Activated CD4-positive, alpha-beta T cell treated with anti-CD3 and anti-CD28 coated beads, Interleukin-2, amount 10 ng/mL, durations not matched to agents 24 days and 14 days (primary cell): ENCODE measurements at regions of chr14 and their contacts with region 1.

Region 1: DNA sequence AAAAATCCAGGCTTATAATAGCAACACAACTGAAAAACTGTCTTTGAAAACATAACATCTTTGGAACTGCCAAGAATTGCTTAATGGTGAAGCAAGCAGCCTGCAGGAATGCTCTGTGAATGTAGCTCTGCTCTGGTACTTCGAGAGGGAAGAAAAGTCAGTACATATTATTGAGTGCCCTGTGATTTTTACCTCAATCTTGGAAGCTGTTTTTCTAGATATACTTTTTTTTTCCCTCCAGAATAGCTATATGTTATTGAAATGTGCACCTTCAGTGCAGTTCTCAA is 508.1 kb downstream of the PCNX1 start:
- DNase-seq: no peak
- H3K4me3 Mint-ChIP-seq: no peak overlapping the region
- H3K27ac Mint-ChIP-seq: no peak overlapping the region
- H3K4me1 Mint-ChIP-seq: peaks cover 25% of the 10 kb centered on the region
- H3K27me3 Mint-ChIP-seq: no peaks in the 10 kb centered on the region

Region 2: GRCh38 chr14:71212683-71213107 is 202.7 kb before region 1 on chr14:
- intact Hi-C with region 1: loop called (anchors 5 kb)
- DNase-seq: no peak
- H3K4me3 Mint-ChIP-seq: no peak overlapping the region
- H3K27ac Mint-ChIP-seq: no peak overlapping the region
- H3K4me1 Mint-ChIP-seq: peaks cover 12% of the 10 kb centered on the region
- H3K27me3 Mint-ChIP-seq: no peaks in the 10 kb centered on the region

Region 3: DNA sequence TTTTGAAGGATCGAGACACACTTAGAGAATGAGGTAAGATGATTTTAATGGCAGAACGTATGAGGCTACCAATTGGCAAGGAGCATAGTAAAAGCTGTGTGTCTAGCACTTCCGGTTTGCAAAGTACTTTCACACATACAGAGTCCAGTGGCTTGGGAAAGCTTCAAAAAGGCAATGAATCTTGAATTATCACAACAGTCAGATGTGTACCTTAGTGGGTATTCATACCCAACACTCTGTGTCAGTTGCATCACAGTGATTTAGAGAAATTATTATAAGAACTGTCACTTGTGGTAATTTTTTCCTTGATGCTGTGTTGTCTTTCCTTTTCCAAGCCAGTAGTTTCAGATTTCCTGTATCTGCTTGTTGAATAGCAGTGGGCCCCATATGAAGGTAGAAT is 83.9 kb before region 1 on chr14:
- intact Hi-C with region 1: loop called (anchors 2 kb)
- DNase-seq: no peak
- H3K4me3 Mint-ChIP-seq: peak overlapping the region; percentile 23
- H3K27ac Mint-ChIP-seq: peak overlapping the region; percentile 92
- H3K4me1 Mint-ChIP-seq: peaks cover 55% of the 10 kb centered on the region
- H3K27me3 Mint-ChIP-seq: no peaks in the 10 kb centered on the region

Region 4: DNA sequence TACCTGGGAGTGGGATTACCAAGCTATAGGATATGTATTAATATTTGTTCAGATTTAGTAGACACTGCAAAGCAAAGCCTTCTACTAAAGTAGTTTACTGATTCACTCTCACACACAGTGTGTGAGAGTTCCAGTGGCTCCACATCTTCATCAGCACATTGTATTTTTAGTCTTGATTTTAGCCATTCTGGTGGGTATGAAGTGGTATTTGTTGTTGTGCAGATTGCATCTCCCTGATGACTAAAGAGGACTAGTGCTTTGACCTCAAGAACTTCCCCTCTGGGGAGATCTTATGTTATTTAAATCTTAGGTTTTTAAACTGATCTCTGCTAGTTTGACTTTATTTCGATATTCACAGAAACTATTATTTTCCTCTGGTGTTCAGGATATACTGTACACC is 37.2 kb after region 1 on chr14:
- intact Hi-C with region 1: loop called (anchors 5 kb)
- DNase-seq: no peak
- H3K4me3 Mint-ChIP-seq: no peak overlapping the region
- H3K27ac Mint-ChIP-seq: no peak overlapping the region
- H3K4me1 Mint-ChIP-seq: peaks cover 19% of the 10 kb centered on the region
- H3K27me3 Mint-ChIP-seq: no peaks in the 10 kb centered on the region

Region 5: GRCh38 chr14:71467361-71467811 is 52.0 kb after region 1 on chr14:
- intact Hi-C with region 1: no loop called
- DNase-seq: peak; percentile 13
- H3K4me3 Mint-ChIP-seq: no peak overlapping the region
- H3K27ac Mint-ChIP-seq: no peak overlapping the region
- H3K4me1 Mint-ChIP-seq: peaks cover 21% of the 10 kb centered on the region
- H3K27me3 Mint-ChIP-seq: no peaks in the 10 kb centered on the region

Region 6: GRCh38 chr14:71478542-71478941 is 63.2 kb after region 1 on chr14:
- intact Hi-C with region 1: loop called (anchors 5 kb)
- DNase-seq: peak; percentile 77
- H3K4me3 Mint-ChIP-seq: peak overlapping the region; percentile 15
- H3K27ac Mint-ChIP-seq: peak overlapping the region; percentile 68
- H3K4me1 Mint-ChIP-seq: peaks cover 45% of the 10 kb centered on the region
- H3K27me3 Mint-ChIP-seq: no peaks in the 10 kb centered on the region

Region 7: GRCh38 chr14:71497645-71498086 is 82.3 kb after region 1 on chr14:
- intact Hi-C with region 1: loop called (anchors 5 kb)
- DNase-seq: no peak
- H3K4me3 Mint-ChIP-seq: peak overlapping the region; percentile 20
- H3K27ac Mint-ChIP-seq: peak overlapping the region; percentile 37
- H3K4me1 Mint-ChIP-seq: peaks cover 20% of the 10 kb centered on the region
- H3K27me3 Mint-ChIP-seq: no peaks in the 10 kb centered on the region

Region 8: GRCh38 chr14:71508901-71509300 is 93.6 kb after region 1 on chr14:
- intact Hi-C with region 1: no loop called
- DNase-seq: no peak
- H3K4me3 Mint-ChIP-seq: no peak overlapping the region
- H3K27ac Mint-ChIP-seq: no peak overlapping the region
- H3K4me1 Mint-ChIP-seq: peaks cover 15% of the 10 kb centered on the region
- H3K27me3 Mint-ChIP-seq: no peaks in the 10 kb centered on the region

Region 9: DNA sequence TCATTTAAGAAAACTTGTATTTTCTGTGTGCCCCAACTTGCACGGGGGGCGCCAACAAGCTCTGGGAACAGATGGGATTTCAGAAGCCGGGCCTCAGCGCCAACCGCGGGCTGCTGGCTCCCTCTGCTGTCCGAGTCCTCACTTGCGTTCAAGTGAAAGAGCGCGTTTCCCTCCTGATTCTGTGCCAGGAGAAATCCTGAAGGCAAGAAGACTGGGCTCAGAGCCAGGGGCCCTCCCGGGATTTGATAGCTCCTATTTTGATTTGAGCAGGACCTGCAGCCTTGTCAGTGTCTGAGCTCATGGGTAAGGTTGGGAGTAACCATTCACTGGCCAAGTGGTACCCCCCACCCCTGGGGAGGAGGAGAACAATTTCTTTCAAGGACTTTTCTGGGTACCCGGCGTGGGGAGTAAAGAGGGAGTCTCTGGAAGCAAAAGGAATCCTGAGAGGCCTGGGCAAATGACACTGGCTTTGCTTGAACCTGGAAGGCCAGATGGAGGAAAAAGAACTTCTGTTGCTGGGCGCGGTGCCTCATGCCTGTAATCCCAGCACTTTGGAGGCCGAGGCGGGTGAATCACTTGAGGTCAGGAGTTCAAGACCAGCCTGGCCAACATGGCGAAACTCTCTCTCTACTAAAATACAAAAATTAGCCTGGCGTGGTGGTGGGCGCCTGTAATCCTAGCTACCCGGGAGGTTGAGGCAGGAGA is 337.9 kb after region 1 on chr14:
- intact Hi-C with region 1: loop called (anchors 10 kb)
- DNase-seq: peak; percentile 90
- H3K4me3 Mint-ChIP-seq: peak overlapping the region; percentile 35
- H3K27ac Mint-ChIP-seq: no peak overlapping the region
- H3K4me1 Mint-ChIP-seq: peaks cover 9% of the 10 kb centered on the region
- H3K27me3 Mint-ChIP-seq: peaks cover 2% of the 10 kb centered on the region